ENCODE measurements at regions of chr16 and their contacts with region 1.

Region 1: DNA sequence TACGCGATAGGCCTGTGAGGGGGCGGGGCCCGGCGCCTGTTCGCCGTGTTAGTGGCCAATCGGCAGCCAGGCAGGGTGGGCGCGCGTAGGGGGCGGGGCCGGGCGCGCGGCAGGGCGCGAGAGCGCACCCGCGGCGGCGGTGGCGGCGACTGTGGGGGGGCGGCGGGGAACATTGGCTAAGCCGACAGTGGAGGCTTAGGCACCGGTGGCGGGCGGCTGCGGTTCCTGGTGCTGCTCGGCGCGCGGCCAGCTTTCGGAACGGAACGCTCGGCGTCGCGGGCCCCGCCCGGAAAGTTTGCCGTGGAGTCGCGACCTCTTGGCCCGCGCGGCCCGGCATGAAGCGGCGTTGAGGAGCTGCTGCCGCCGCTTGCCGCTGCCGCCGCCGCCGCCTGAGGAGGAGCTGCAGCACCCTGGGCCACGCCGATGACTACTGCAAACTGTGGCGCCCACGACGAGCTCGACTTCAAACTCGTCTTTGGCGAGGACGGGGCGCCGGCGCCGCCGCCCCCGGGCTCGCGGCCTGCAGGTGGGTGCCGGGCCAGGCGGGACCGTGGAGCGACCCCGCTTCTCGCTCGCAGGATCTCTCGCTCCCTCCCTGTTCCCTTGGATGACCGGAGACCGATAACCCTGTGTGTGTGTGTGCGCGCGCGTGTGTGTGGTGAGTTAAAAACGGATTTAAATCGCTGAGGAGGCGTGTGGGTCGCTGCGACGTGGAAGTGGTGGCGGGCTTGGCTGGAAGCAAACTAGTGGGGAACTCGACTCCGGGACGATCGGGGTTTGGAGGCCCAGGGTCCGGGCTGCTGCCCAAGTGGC is at the start of gene NFATC3:
- DNase-seq: peak; percentile 99
- ATAC-seq: peak; percentile 79
- H3K4me3 Mint-ChIP-seq: peak within 1 kb of the TSS; percentile 88
- H3K27ac Mint-ChIP-seq: peak within 1 kb of the TSS; percentile 94
- H3K4me1 Mint-ChIP-seq: peaks cover 55% of the 10 kb centered on the region
- H3K27me3 Mint-ChIP-seq: no peaks in the 10 kb centered on the region
- total RNA-seq, gene NFATC3: 166 to 169 TPM

Region 2: DNA sequence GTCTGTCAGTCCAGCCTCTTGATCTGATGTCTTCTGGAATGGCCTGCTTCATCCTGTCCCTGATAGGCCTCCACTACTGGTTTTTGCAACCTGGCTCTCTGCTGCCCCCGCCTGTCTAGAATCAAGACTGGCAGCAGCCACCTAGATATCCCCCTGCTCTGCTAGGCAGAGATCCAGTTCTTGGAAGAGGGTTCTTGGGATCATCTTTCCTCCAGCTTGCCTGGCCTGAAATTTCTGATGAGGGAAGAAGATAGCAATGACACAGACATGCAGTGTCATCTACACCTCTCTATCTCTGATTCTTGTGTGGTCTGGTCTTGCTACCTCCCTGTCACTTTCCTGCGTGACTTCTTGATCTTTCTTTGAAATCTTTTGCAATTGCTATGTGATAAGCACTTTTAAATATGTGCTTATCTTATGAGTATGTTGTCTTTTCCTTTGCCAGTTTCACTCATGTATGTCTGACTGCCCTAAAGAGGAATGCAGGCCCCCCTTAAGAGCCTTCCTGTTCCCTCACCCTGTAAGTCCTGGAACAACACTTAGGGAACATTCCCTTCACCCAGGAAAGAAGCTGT is 20.6 kb before region 1 on chr16:
- CTCF ChIA-PET with region 1: interaction called, 142 read pairs
- POLR2A ChIA-PET with region 1: interaction called, 71 read pairs
- DNase-seq: peak; percentile 87
- ATAC-seq: peak; percentile 74
- H3K4me3 Mint-ChIP-seq: no peak overlapping the region
- H3K27ac Mint-ChIP-seq: peak overlapping the region; percentile 88
- H3K4me1 Mint-ChIP-seq: peaks cover 85% of the 10 kb centered on the region
- H3K27me3 Mint-ChIP-seq: no peaks in the 10 kb centered on the region

Region 3: DNA sequence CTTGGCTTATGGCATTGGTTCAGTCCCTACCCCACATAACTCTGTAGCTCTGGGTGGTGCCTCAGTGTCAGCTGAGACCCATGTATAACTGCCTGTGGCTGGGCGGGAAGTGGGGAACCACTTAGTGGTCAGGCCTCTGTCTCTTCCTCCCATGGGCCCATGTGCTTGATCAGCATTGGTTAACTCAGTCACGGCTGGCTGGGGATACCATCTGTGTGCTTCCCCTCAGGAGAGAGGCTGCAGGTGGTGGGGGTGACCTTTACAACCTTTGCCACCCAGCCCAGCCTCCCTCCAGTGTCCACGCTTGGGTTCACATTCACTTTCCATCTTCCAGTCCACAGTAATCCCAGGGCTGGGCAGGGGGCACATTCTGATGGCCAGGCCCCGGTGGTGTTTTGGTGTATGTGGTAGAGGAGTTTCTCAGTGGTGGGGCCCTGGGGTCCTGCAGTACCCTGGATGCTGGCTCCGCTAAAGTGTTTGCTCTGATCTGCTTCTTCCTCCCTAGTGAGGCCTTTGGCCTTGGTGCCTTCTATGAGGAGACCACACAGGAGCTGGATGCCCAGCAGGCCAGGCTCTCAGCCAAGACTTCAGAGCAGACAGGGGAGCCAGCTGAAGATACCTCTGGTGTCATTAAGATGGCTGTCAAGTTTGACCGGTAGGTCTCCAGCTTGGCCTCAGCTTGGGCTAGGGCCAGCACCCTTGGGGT is 10.5 kb before region 1 on chr16:
- CTCF ChIA-PET with region 1: interaction called, 142 read pairs
- POLR2A ChIA-PET with region 1: interaction called, 76 read pairs
- DNase-seq: peak; percentile 95
- ATAC-seq: peak; percentile 81
- H3K4me3 Mint-ChIP-seq: peak overlapping the region; percentile 57
- H3K27ac Mint-ChIP-seq: peak overlapping the region; percentile 89
- H3K4me1 Mint-ChIP-seq: peaks cover 89% of the 10 kb centered on the region
- H3K27me3 Mint-ChIP-seq: no peaks in the 10 kb centered on the region

Region 4: DNA sequence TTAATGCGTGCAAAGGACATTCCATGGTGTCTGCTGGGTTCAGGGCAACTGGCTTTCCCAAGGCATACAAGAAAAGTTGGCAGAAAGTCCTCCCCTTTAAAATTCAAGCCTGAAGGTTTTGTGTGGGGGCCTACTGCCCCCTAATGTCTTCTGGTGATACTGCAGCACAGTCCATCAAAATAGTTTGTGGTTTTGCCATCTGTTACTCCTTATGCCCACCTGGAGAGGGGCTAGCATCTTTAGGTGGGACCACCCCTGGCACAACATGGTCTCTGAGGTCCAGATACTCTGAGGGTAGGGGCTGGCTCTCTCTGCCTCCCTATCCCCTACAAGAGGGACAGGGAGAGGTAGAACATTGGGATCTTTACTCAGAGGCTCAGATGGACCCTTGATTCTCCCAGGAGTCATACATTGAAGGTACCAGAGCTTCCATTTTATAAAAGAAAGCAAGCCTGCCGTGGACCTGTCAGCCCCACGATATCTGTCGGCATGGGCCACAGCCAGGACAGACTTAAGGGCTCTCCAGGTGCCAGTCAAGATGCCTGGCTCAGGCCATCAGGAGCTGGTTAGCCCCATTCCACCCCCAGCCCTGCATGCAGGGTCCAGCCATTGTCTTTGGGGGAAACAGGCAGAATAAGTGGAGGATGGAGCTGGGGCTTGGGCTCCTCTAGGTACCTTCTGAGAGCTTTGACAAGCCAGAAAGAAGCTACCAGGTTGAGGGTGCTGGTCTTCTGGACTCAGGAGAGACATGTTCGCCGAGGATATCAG is 144.2 kb after region 1 on chr16:
- CTCF ChIA-PET with region 1: interaction called, 10 read pairs
- POLR2A ChIA-PET with region 1: interaction called, 3 read pairs
- DNase-seq: peak; percentile 55
- ATAC-seq: no peak
- H3K4me3 Mint-ChIP-seq: no peak overlapping the region
- H3K27ac Mint-ChIP-seq: no peak overlapping the region
- H3K4me1 Mint-ChIP-seq: peaks cover 53% of the 10 kb centered on the region
- H3K27me3 Mint-ChIP-seq: no peaks in the 10 kb centered on the region

Measured in activated CD8-positive, alpha-beta T cell treated with anti-CD3 and anti-CD28 coated beads, Interleukin-2, amount 10 ng/mL, durations not matched to agents 7 days and 5 days (primary cell).